ENCODE measurements at regions of chr13 and their contacts with region 1.

Region 1: GRCh38 chr13:98672944-98673545 is 79.4 kb downstream of the SLC15A1 start:
- DNase-seq: peak; percentile 75

Region 2: GRCh38 chr13:98484289-98485219 is 188.5 kb before region 1 on chr13:
- in situ Hi-C with region 1: loop called (anchors 5 kb)
- DNase-seq: no peak

Measured in G401 (cell line).